Thyroid gland (tissue), 4 donors: ENCODE measurements at regions of chr12 and their contacts with region 1.

Region 1: DNA sequence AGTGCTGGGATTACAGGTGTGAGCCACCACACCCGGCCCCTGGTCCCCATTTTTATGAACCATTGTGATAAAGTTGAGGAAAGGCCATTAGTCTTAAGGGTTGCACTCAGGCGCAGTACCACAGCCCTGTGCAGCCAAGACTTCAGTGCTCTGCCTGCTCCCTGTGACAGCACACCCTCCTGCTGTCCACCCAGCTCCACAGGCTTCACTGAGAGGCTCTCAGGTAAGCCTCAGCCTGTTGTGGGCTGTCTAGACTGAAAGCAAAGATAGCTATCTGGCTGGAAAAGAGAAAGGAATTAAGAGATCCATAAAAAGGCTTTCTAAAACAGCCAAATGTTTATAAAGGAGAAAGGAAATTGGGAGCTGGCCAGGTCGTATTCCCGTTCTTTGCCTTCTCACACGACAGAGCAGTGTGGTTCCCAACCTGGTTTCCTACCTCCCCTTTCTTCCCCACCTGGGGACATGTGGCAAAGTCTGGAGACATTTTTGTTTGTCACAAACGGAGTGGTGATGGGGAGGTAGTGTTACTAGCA is 19.1 kb upstream of the DNM1L start:
- DNase-seq: no peak
- H3K4me3 ChIP-seq: no peak overlapping the region
- H3K27ac ChIP-seq: peak overlapping the region in 1 of 3 donors; percentile 71
- H3K4me1 ChIP-seq: no peaks in the 10 kb centered on the region
- H3K27me3 ChIP-seq: no peaks in the 10 kb centered on the region
- CTCF ChIP-seq: no peak
- POLR2A ChIP-seq: no peak

Region 2: GRCh38 chr12:32365473-32366064 is 294.4 kb before region 1 on chr12:
- intact Hi-C with region 1: loop called (anchors 10 kb)
- DNase-seq: peak; percentile 41 to 57
- H3K4me3 ChIP-seq: no peak overlapping the region
- H3K27ac ChIP-seq: no peak overlapping the region
- H3K4me1 ChIP-seq: no peaks in the 10 kb centered on the region
- H3K27me3 ChIP-seq: no peaks in the 10 kb centered on the region
- CTCF ChIP-seq: peak; percentile 30 to 87 (median 70)
- POLR2A ChIP-seq: no peak

Region 3: DNA sequence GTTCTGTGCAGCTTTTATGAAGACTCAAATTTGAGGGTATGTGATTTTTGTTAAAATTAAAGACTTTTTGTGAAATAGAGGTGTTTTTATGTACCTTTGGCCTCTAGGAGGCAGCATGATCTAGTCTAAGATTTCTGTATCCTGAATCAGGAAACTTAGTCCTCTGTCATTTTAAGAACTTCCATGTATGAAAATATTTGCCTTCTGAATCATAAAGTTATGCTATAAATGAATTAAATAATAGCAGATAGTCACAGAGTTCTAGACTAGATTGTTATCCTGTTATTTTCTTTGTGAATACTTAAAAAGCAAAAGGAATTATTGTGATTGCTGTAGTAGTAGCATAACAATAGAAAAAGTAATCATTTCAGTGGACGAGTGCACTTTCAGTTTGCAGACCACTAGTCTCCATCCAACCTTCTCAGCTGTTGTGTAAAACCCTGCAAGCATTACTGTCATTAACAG is 204.3 kb before region 1 on chr12:
- intact Hi-C with region 1: loop called (anchors 5 kb)
- DNase-seq: no peak
- H3K4me3 ChIP-seq: peak overlapping the region in 1 of 3 donors; percentile 4
- H3K27ac ChIP-seq: peak overlapping the region; percentile 21 to 57 (median 51)
- H3K4me1 ChIP-seq: peaks cover 0 to 12% of the 10 kb centered on the region in 2 donors
- H3K27me3 ChIP-seq: no peaks in the 10 kb centered on the region
- CTCF ChIP-seq: peak in 5 of 6 experiments; percentile 18 to 79 (median 55)
- POLR2A ChIP-seq: no peak